Esophagus muscularis mucosa (tissue), 4 donors: ENCODE measurements at regions of chr20 and their contacts with region 1.

Region 1: DNA sequence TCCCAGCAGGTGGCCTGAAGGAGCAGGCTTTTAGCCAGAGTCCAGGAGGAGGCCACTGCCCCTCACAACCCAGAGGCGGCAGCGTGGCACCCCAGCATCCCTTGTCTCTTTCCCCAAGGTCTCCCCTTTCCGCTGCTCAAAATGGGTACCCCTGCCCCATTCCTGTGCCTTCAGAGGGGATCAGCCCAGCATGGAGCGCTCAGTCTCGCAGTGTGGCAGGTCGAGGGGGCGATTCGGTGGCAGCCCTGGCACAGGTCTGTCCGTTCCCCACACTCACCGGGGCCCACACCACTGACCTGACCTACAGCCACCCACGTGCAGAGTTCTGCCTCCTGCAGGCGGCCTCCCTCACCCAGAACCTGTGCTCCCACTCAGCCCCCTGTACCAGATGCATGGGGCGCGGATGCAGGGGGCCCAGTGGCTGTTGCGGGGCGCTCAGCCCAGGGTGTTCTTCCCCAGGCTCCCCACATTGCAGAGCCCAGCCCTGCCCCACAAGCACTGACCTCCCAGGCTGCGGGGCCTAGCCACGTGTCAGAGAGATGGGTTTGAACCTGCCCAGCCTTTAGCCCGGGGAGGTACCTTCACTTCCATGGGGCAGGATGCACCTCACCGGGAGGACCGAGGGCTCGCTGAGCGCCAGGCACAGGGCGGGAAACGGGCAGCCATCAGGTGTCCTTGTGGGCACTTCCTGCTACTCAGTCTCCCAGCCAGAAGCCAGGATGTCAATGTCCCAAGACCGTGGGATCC is 41.8 kb downstream of the DSTN start:
- DNase-seq: peak; percentile 92
- H3K4me3 ChIP-seq: no peak overlapping the region
- H3K27ac ChIP-seq: peak overlapping the region; percentile 82 to 86 (median 84)
- H3K4me1 ChIP-seq: peaks cover 63 to 100% (median 99%) of the 10 kb centered on the region in 4 donors
- H3K27me3 ChIP-seq: no peaks in the 10 kb centered on the region
- CTCF ChIP-seq: peak in 2 of 3 experiments; percentile 24 to 52
- EP300 ChIP-seq: no peak
- POLR2A ChIP-seq: no peak

Region 2: GRCh38 chr20:17579369-17580039 is 32.2 kb before region 1 on chr20:
- intact Hi-C with region 1: loop called (anchors 5 kb)
- DNase-seq: no peak
- H3K4me3 ChIP-seq: peak overlapping the region; percentile 6 to 99 (median 60)
- H3K27ac ChIP-seq: peak overlapping the region; percentile 62 to 100 (median 97)
- H3K4me1 ChIP-seq: peaks cover 50 to 99% (median 90%) of the 10 kb centered on the region in 4 donors
- H3K27me3 ChIP-seq: no peaks in the 10 kb centered on the region
- CTCF ChIP-seq: no peak
- EP300 ChIP-seq: no peak
- POLR2A ChIP-seq: no peak